ENCODE measurements at regions of chr11 and their contacts with region 1.

Region 1: DNA sequence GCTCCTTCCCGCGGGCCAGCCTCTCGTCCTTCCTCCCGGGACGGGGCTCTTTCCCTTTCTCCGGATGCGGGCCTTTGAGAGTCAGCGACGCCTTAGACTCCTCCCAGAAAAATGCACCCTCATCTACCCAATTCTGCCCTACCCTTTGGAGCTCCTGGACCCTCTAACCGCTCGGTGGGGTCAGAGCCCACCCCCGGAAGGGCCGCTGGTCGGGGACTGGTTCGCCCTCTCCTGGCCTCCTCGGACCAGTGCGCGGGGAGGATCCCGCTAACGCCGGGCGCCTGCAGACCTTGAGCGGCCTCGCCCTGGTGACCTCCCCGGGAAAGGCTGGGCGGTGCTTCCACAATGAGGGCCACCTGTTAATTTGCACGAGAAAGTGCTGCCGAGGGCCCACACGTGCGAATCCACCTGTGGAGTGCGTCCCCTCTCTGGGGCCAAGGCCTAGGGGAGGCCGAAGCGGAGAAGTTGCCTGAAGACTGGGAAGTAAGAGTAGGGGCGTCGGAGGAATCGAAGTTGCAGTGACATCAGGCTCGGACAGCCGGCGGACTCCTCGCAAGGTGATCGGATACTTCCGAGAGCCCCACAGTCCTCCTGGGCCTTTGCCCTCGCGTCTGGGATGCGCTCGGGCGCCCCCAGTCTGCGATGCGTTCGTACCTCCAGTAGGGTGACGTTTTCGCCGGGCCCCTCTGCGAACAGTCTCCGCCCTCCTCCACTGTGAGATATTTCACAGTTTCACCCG is 61.5 kb downstream of the ENDOD1 start:
- DNase-seq: peak; percentile 93
- ATAC-seq: peak; percentile 93 to 94
- H3K4me3 ChIP-seq: peak overlapping the region; percentile 79
- H3K27ac ChIP-seq: peak overlapping the region; percentile 97
- H3K4me1 ChIP-seq: peaks cover 53% of the 10 kb centered on the region
- H3K27me3 ChIP-seq: no peaks in the 10 kb centered on the region
- CTCF ChIP-seq: peak; percentile 71

Region 2: DNA sequence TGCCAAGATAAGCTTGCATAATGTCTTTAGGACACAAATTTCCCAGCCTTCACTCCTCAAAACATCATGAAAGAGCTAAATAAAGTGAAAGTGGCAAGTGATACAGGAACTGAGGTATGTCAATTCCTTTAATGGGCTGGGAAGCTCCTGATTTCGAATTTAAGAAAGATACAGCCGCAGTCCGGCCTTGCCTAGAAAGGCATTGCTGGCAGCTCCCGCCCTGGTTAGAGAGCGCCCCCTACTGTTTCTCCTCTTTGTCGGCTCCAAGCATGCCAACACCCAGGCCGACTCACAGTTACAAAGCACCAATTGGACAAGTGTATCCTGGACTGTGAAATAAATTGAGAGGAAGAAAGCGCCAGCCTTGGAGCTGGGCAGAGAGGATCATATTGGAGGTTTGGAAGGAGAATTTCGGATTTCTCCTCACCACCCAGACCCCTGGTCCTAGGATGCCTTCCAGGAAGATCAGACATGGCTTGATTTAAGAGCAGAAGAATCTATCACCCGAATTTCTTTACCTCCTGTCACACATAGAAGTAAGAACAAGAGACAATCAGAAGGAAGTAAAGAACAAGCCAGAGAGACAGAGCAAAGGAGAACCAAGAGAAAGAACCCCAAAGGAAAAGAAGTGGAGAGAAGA is 554.5 kb after region 1 on chr11:
- intact Hi-C with region 1: loop called (anchors 10 kb)
- DNase-seq: peak; percentile 86
- ATAC-seq: peak; percentile 96 to 99
- H3K4me3 ChIP-seq: no peak overlapping the region
- H3K27ac ChIP-seq: peak overlapping the region; percentile 15
- H3K4me1 ChIP-seq: peaks cover 15% of the 10 kb centered on the region
- H3K27me3 ChIP-seq: no peaks in the 10 kb centered on the region
- CTCF ChIP-seq: peak; percentile 93

Region 3: DNA sequence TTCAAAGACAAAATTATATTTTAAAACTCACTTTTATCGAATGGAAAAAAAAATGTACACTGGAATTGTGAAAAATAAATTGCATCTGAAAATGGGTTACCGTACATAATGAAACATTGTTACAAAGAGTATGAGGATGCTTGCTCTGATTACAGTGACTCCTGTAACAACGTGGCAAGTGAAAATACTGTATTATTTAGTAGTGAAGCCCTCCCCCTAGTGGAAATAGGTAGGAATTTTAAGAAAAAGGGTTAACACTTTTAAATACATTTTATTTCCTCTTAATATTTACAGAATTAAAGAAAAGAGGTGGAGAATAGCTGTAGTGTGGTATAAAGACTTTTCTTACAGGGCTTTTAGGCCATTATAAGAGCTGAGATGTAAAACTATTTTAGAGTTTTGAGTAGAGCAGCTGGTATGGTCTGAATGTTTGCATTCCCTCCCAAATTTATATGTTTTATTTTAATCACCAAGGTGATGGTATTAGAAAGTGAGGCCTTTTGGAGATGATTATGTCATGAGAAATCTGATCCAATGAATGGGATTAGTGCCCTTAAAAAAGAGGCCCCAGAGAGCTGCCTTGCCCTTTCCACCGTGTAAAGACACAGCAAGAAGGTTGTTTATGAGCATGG is 613.3 kb after region 1 on chr11:
- intact Hi-C with region 1: loop called (anchors 10 kb)
- DNase-seq: no peak
- ATAC-seq: peak; percentile 74 to 76
- H3K4me3 ChIP-seq: no peak overlapping the region
- H3K27ac ChIP-seq: no peak overlapping the region
- H3K4me1 ChIP-seq: no peaks in the 10 kb centered on the region
- H3K27me3 ChIP-seq: no peaks in the 10 kb centered on the region
- CTCF ChIP-seq: peak; percentile 66